ENCODE measurements at regions of chr1 and their contacts with region 1.

Region 1: GRCh38 chr1:198543670-198544260 is 3.3 kb upstream of the ATP6V1G3 start:
- DNase-seq: peak; percentile 73
- ATAC-seq: peak; percentile 78
- H3K4me3 ChIP-seq: peak overlapping the region in 1 of 5 experiments; percentile 44
- H3K4me3 Mint-ChIP-seq: peak overlapping the region; percentile 77
- H3K27ac ChIP-seq: peak overlapping the region; percentile 77 to 81
- H3K27ac Mint-ChIP-seq: peak overlapping the region; percentile 94
- H3K4me1 ChIP-seq: peaks cover 37 to 57% of the 10 kb centered on the region in 2 donors
- H3K4me1 Mint-ChIP-seq: peaks cover 55% of the 10 kb centered on the region
- H3K27me3 ChIP-seq: no peaks in the 10 kb centered on the region
- H3K27me3 Mint-ChIP-seq: no peaks in the 10 kb centered on the region
- CTCF ChIP-seq: no peak

Region 2: GRCh38 chr1:197976368-197976767 is 567.4 kb before region 1 on chr1:
- CTCF ChIA-PET with region 1: no interaction called
- POLR2A ChIA-PET with region 1: no interaction called
- intact Hi-C with region 1: no loop called
- DNase-seq: no peak
- ATAC-seq: no peak
- H3K4me3 ChIP-seq: no peak overlapping the region
- H3K4me3 Mint-ChIP-seq: no peak overlapping the region
- H3K27ac ChIP-seq: no peak overlapping the region
- H3K27ac Mint-ChIP-seq: no peak overlapping the region
- H3K4me1 ChIP-seq: no peaks in the 10 kb centered on the region
- H3K4me1 Mint-ChIP-seq: no peaks in the 10 kb centered on the region
- H3K27me3 ChIP-seq: peaks cover 0 to 3% (median 1%) of the 10 kb centered on the region in 4 experiments
- H3K27me3 Mint-ChIP-seq: peaks cover 20% of the 10 kb centered on the region
- CTCF ChIP-seq: no peak

Region 3: DNA sequence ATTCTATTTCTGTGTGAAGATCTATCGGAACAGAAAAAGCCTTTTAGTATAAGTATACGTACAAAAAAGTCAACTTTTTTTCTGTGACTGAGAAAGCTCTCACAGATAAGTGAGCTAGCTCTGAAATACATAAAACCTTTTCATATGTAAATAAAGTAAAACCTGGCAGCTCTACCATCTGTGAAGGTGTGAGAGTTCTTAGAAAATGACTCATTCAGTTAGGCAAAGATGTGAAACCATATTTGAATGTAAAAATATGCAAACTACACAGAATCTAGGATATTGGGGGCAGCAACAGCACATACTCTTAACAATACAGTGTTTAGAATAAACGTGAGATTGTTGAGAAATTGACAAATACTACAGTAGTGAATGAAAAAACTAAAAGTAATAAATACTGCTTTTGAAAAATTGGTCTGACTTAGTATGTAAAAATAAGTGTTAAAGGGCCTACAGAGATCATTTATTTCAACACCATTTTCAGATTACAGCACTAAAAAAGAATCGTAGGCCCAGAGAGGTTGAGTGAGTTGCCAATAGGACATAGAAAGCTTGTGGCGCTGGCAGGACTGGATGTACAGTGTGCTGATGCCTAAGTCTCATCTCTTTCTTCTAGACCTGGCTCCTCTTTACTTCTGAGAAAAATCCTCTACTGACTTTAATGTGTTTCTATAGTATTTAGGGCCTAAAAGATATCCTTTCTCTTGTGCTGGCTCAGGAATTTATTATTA is 23.1 kb before region 1 on chr1:
- CTCF ChIA-PET with region 1: interaction called, 6 read pairs
- POLR2A ChIA-PET with region 1: no interaction called
- intact Hi-C with region 1: loop called (anchors 2 kb)
- DNase-seq: peak; percentile 43
- ATAC-seq: peak; percentile 64
- H3K4me3 ChIP-seq: peak overlapping the region in 1 of 5 experiments; percentile 45
- H3K4me3 Mint-ChIP-seq: peak overlapping the region; percentile 67
- H3K27ac ChIP-seq: peak overlapping the region; percentile 35 to 59
- H3K27ac Mint-ChIP-seq: peak overlapping the region; percentile 37
- H3K4me1 ChIP-seq: peaks cover 20 to 34% of the 10 kb centered on the region in 2 donors
- H3K4me1 Mint-ChIP-seq: peaks cover 57% of the 10 kb centered on the region
- H3K27me3 ChIP-seq: no peaks in the 10 kb centered on the region
- H3K27me3 Mint-ChIP-seq: no peaks in the 10 kb centered on the region
- CTCF ChIP-seq: no peak